ENCODE measurements at regions of chr19 and their contacts with region 1.

Region 1: GRCh38 chr19:19068659-19069654 is 5.2 kb downstream of the SLC25A42 start:
- DNase-seq: no peak
- H3K4me3 ChIP-seq: no peak overlapping the region
- H3K27ac ChIP-seq: no peak overlapping the region
- H3K4me1 ChIP-seq: peaks cover 15% of the 10 kb centered on the region
- H3K27me3 ChIP-seq: no peaks in the 10 kb centered on the region
- CTCF ChIP-seq: no peak

Region 2: GRCh38 chr19:19297759-19298158 is 228.8 kb after region 1 on chr19:
- CTCF ChIA-PET with region 1: interaction called, 24 read pairs
- dilution Hi-C with region 1: no loop called
- in situ Hi-C with region 1: no loop called
- intact Hi-C with region 1: no loop called
- DNase-seq: no peak
- H3K4me3 ChIP-seq: no peak overlapping the region
- H3K27ac ChIP-seq: no peak overlapping the region
- H3K4me1 ChIP-seq: no peaks in the 10 kb centered on the region
- H3K27me3 ChIP-seq: no peaks in the 10 kb centered on the region
- CTCF ChIP-seq: no peak